SK-N-SH (cell line): ENCODE measurements at regions of chr11 and their contacts with region 1.

Region 1: GRCh38 chr11:18395735-18396504 is 1.6 kb downstream of the LDHA start:
- DNase-seq: peak; percentile 93
- H3K4me3 ChIP-seq: peak overlapping the region; percentile 84 to 98
- H3K27ac ChIP-seq: peak overlapping the region; percentile 89 to 96
- H3K4me1 ChIP-seq: peaks cover 12% of the 10 kb centered on the region in 2 experiments; a peak in 3 of 4 replicates
- H3K27me3 ChIP-seq: no peaks in the 10 kb centered on the region
- CTCF ChIP-seq: no peak
- EP300 ChIP-seq: peak; percentile 27 to 66; a peak in 2 of 4 replicates
- RAD21 ChIP-seq: no peak; the same call in 1 of the 2 replicates

Region 2: GRCh38 chr11:18321980-18322711 is 73.8 kb before region 1 on chr11 and contains the starts of genes GTF2H1 and HPS5:
- CTCF ChIA-PET with region 1: no interaction called
- POLR2A ChIA-PET with region 1: interaction called, 25 read pairs
- DNase-seq: peak; percentile 95
- H3K4me3 ChIP-seq: peak within 1 kb of the TSS; percentile 92 to 97
- H3K27ac ChIP-seq: peak within 1 kb of the TSS; percentile 95 to 96
- H3K4me1 ChIP-seq: peaks cover 5 to 22% of the 10 kb centered on the region in 2 experiments; a peak in 3 of 4 replicates
- H3K27me3 ChIP-seq: no peaks in the 10 kb centered on the region
- CTCF ChIP-seq: 0 out of 2 replicates have a peak, but pooled peaks have one; percentile 0
- EP300 ChIP-seq: no peak
- RAD21 ChIP-seq: peak; percentile 19; the same call in 1 of the 2 replicates
- polyA plus RNA-seq, gene GTF2H1: 31.2 and 40.4 TPM in 2 replicates
- polyA plus RNA-seq, gene HPS5: 8.2 and 10.8 TPM in 2 replicates

Region 3: GRCh38 chr11:18364495-18365073 is 31.3 kb before region 1 on chr11:
- CTCF ChIA-PET with region 1: no interaction called
- POLR2A ChIA-PET with region 1: interaction called, 28 read pairs
- DNase-seq: no peak
- H3K4me3 ChIP-seq: no peak overlapping the region
- H3K27ac ChIP-seq: no peak overlapping the region
- H3K4me1 ChIP-seq: peaks cover 5 to 7% of the 10 kb centered on the region in 2 experiments; a peak in 3 of 4 replicates
- H3K27me3 ChIP-seq: no peaks in the 10 kb centered on the region
- CTCF ChIP-seq: no peak
- EP300 ChIP-seq: no peak
- RAD21 ChIP-seq: no peak

Region 4: GRCh38 chr11:18383388-18384156 is 12.3 kb before region 1 on chr11:
- CTCF ChIA-PET with region 1: interaction called, 3 read pairs
- POLR2A ChIA-PET with region 1: interaction called, 45 read pairs
- DNase-seq: peak; percentile 55
- H3K4me3 ChIP-seq: no peak overlapping the region
- H3K27ac ChIP-seq: peak overlapping the region; percentile 94 to 95
- H3K4me1 ChIP-seq: peaks cover 21 to 23% of the 10 kb centered on the region in 2 experiments
- H3K27me3 ChIP-seq: no peaks in the 10 kb centered on the region
- CTCF ChIP-seq: no peak
- EP300 ChIP-seq: no peak
- RAD21 ChIP-seq: no peak

Region 5: GRCh38 chr11:18533354-18533753 is 137.4 kb after region 1 on chr11:
- CTCF ChIA-PET with region 1: no interaction called
- POLR2A ChIA-PET with region 1: no interaction called
- DNase-seq: no peak
- H3K4me3 ChIP-seq: no peak overlapping the region
- H3K27ac ChIP-seq: no peak overlapping the region
- H3K4me1 ChIP-seq: no peaks in the 10 kb centered on the region
- H3K27me3 ChIP-seq: no peaks in the 10 kb centered on the region
- CTCF ChIP-seq: no peak
- EP300 ChIP-seq: no peak
- RAD21 ChIP-seq: no peak